Activated CD8-positive, alpha-beta T cell treated with anti-CD3 and anti-CD28 coated beads, Interleukin-2, amount 10 ng/mL, durations not matched to agents 7 days and 5 days (primary cell): ENCODE measurements at regions of chr7 and their contacts with region 1.

Region 1: GRCh38 chr7:23055582-23056178 is 41.8 kb upstream of the HYCC1 start:
- DNase-seq: peak; percentile 75
- ATAC-seq: peak; percentile 94
- H3K4me3 Mint-ChIP-seq: no peak overlapping the region
- H3K27ac Mint-ChIP-seq: no peak overlapping the region
- H3K4me1 Mint-ChIP-seq: peaks cover 6% of the 10 kb centered on the region
- H3K27me3 Mint-ChIP-seq: peaks cover 7% of the 10 kb centered on the region

Region 2: GRCh38 chr7:22726345-22727185 is 329.1 kb before region 1 on chr7:
- CTCF ChIA-PET with region 1: interaction called, 40 read pairs
- POLR2A ChIA-PET with region 1: no interaction called
- DNase-seq: peak; percentile 76
- ATAC-seq: peak; percentile 93
- H3K4me3 Mint-ChIP-seq: peak overlapping the region; percentile 56
- H3K27ac Mint-ChIP-seq: peak overlapping the region; percentile 63
- H3K4me1 Mint-ChIP-seq: peaks cover 60% of the 10 kb centered on the region
- H3K27me3 Mint-ChIP-seq: peaks cover 30% of the 10 kb centered on the region

Region 3: GRCh38 chr7:22822486-22823141 is 233.1 kb before region 1 on chr7 and contains the start of gene TOMM7:
- CTCF ChIA-PET with region 1: interaction called, 14 read pairs
- POLR2A ChIA-PET with region 1: interaction called, 3 read pairs
- DNase-seq: peak; percentile 92
- ATAC-seq: peak; percentile 94
- H3K4me3 Mint-ChIP-seq: peak within 1 kb of the TSS; percentile 94
- H3K27ac Mint-ChIP-seq: peak within 1 kb of the TSS; percentile 89
- H3K4me1 Mint-ChIP-seq: peaks cover 41% of the 10 kb centered on the region
- H3K27me3 Mint-ChIP-seq: peaks cover 18% of the 10 kb centered on the region
- total RNA-seq, gene TOMM7: 206 to 208 TPM

Region 4: GRCh38 chr7:22860784-22861482 is 194.7 kb before region 1 on chr7:
- CTCF ChIA-PET with region 1: interaction called, 31 read pairs
- POLR2A ChIA-PET with region 1: no interaction called
- DNase-seq: peak; percentile 36
- ATAC-seq: no peak
- H3K4me3 Mint-ChIP-seq: no peak overlapping the region
- H3K27ac Mint-ChIP-seq: peak overlapping the region; percentile 26
- H3K4me1 Mint-ChIP-seq: peaks cover 35% of the 10 kb centered on the region
- H3K27me3 Mint-ChIP-seq: no peaks in the 10 kb centered on the region

Region 5: GRCh38 chr7:22992874-22993840 is 62.5 kb before region 1 on chr7:
- CTCF ChIA-PET with region 1: interaction called, 26 read pairs
- POLR2A ChIA-PET with region 1: no interaction called
- DNase-seq: peak; percentile 36
- ATAC-seq: no peak
- H3K4me3 Mint-ChIP-seq: no peak overlapping the region
- H3K27ac Mint-ChIP-seq: peak overlapping the region; percentile 15
- H3K4me1 Mint-ChIP-seq: peaks cover 38% of the 10 kb centered on the region
- H3K27me3 Mint-ChIP-seq: no peaks in the 10 kb centered on the region

Region 6: GRCh38 chr7:23020742-23021401 is 34.8 kb before region 1 on chr7:
- CTCF ChIA-PET with region 1: interaction called, 28 read pairs
- POLR2A ChIA-PET with region 1: interaction called, 3 read pairs
- DNase-seq: peak; percentile 28
- ATAC-seq: peak; percentile 69
- H3K4me3 Mint-ChIP-seq: no peak overlapping the region
- H3K27ac Mint-ChIP-seq: peak overlapping the region; percentile 77
- H3K4me1 Mint-ChIP-seq: peaks cover 52% of the 10 kb centered on the region
- H3K27me3 Mint-ChIP-seq: peaks cover 12% of the 10 kb centered on the region